Activated CD8-positive, alpha-beta T cell treated with anti-CD3 and anti-CD28 coated beads, Interleukin-2, amount 10 ng/mL, durations not matched to agents 7 days and 5 days (primary cell): ENCODE measurements at regions of chr14 and their contacts with region 1.

Region 1: GRCh38 chr14:64345513-64345912 is 42.6 kb upstream of the MTHFD1 start:
- DNase-seq: no peak
- ATAC-seq: no peak
- H3K4me3 Mint-ChIP-seq: no peak overlapping the region
- H3K27ac Mint-ChIP-seq: no peak overlapping the region
- H3K4me1 Mint-ChIP-seq: peaks cover 7% of the 10 kb centered on the region
- H3K27me3 Mint-ChIP-seq: no peaks in the 10 kb centered on the region

Region 2: GRCh38 chr14:64279704-64280668 is 65.5 kb before region 1 on chr14:
- CTCF ChIA-PET with region 1: no interaction called
- POLR2A ChIA-PET with region 1: no interaction called
- DNase-seq: no peak
- ATAC-seq: peak; percentile 55
- H3K4me3 Mint-ChIP-seq: no peak overlapping the region
- H3K27ac Mint-ChIP-seq: peak overlapping the region; percentile 28
- H3K4me1 Mint-ChIP-seq: peaks cover 12% of the 10 kb centered on the region
- H3K27me3 Mint-ChIP-seq: no peaks in the 10 kb centered on the region

Region 3: GRCh38 chr14:64363265-64363846 is 17.8 kb after region 1 on chr14:
- CTCF ChIA-PET with region 1: interaction called, 12 read pairs
- POLR2A ChIA-PET with region 1: no interaction called
- DNase-seq: no peak
- ATAC-seq: no peak
- H3K4me3 Mint-ChIP-seq: no peak overlapping the region
- H3K27ac Mint-ChIP-seq: no peak overlapping the region
- H3K4me1 Mint-ChIP-seq: no peaks in the 10 kb centered on the region
- H3K27me3 Mint-ChIP-seq: no peaks in the 10 kb centered on the region

Region 4: DNA sequence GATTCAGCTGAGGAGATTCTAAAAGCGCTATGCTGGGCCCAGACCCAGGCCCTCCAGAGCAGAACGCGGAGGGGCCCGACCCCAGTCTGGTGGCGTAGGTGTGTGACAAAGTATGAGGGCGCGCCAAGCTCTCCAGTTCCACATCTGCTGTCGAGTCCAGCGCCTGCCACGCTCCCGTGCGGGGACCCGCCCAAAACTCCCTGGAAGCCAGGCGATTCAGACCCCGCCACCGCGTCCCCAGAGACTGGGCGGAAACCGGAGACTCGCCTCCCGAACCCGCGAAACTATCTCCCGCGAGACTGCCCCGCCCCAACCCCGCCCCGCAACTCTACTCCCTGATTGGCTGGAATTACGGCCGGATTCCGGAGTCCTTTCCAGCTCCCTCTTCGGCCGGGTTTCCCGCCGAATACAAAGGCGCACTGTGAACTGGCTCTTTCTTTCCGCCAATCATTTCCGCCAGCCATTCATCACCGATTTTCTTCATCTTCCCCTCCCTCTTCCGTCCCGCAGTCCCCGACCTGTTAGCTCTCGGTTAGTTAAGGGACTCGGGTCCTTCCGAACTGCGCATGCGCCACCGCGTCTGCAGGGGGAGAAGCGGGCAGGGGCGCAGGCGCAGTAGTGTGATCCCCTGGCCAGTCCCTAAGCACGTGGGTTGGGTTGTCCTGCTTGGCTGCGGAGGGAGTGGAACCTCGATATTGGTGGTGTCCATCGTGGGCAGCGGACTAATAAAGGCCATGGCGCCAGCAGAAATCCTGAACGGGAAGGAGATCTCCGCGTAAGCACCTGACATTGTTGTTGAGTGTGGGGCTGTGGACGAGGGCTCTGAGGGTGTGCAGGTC is 42.4 kb after region 1 on chr14 and contains the start of gene MTHFD1:
- CTCF ChIA-PET with region 1: interaction called, 14 read pairs
- POLR2A ChIA-PET with region 1: interaction called, 6 read pairs
- DNase-seq: peak; percentile 99
- ATAC-seq: peak; percentile 92
- H3K4me3 Mint-ChIP-seq: peak within 1 kb of the TSS; percentile 99
- H3K27ac Mint-ChIP-seq: peak within 1 kb of the TSS; percentile 94
- H3K4me1 Mint-ChIP-seq: peaks cover 45% of the 10 kb centered on the region
- H3K27me3 Mint-ChIP-seq: no peaks in the 10 kb centered on the region
- total RNA-seq, gene MTHFD1: 231 to 238 TPM